ENCODE measurements at regions of chr12 and their contacts with region 1.

Region 1: GRCh38 chr12:56189176-56189917 is at the start of gene SMARCC2:
- DNase-seq: peak; percentile 75
- ATAC-seq: peak; percentile 85
- H3K4me3 ChIP-seq: peak within 1 kb of the TSS; percentile 86 to 88
- H3K27ac ChIP-seq: peak within 1 kb of the TSS; percentile 84
- H3K4me1 ChIP-seq: peaks cover 17 to 27% of the 10 kb centered on the region in 2 experiments
- H3K27me3 ChIP-seq: no peaks in the 10 kb centered on the region
- CTCF ChIP-seq: peak; percentile 65 to 70 (median 65)
- POLR2A ChIP-seq: no peak
- RAD21 ChIP-seq: peak; percentile 54; the same call in 1 of the 2 replicates
- total RNA-seq, gene SMARCC2: 99.7 TPM

Region 2: DNA sequence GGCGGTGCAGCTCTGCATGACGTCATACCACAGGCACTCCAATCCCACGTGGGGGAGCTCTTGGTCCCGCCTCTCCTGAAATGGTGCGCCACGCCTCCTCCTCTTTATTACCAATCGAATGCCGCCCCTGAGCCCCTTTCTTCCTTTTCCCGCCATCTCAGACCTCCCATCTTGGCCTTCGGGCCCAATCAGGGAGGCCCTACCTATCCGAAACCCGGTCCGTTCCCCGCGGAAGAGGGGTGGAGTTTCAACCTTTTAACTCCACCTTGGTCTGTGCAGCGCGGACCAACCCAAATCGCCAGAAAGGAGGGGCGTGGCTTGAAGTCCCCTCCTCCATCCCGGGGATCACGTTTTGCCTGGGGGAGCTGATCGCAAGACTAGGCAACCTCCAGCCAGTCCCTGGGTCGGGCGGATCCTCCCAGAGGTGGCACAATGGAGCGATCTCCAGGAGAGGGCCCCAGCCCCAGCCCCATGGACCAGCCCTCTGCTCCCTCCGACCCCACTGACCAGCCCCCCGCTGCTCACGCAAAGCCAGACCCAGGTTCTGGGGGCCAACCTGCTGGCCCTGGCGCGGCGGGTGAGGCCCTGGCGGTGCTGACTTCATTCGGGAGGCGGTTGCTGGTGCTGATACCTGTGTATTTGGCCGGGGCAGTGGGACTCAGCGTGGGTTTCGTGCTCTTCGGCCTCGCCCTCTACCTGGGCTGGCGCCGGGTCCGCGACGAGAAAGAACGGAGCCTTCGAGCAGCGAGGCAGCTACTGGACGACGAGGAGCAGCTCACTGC is 61.3 kb before region 1 on chr12 and contains the start of gene ESYT1:
- CTCF ChIA-PET with region 1: interaction called, 24 read pairs
- POLR2A ChIA-PET with region 1: interaction called, 17 read pairs
- RAD21 ChIA-PET with region 1: interaction called in 1 of 2 experiments, 6 read pairs
- intact Hi-C with region 1: no loop called
- DNase-seq: peak; percentile 100
- ATAC-seq: peak; percentile 93
- H3K4me3 ChIP-seq: peak within 1 kb of the TSS; percentile 90 to 91
- H3K27ac ChIP-seq: peak within 1 kb of the TSS; percentile 76
- H3K4me1 ChIP-seq: peaks cover 16 to 33% of the 10 kb centered on the region in 2 experiments
- H3K27me3 ChIP-seq: no peaks in the 10 kb centered on the region
- CTCF ChIP-seq: no peak
- POLR2A ChIP-seq: peak; percentile 88
- RAD21 ChIP-seq: no peak
- total RNA-seq, gene ESYT1: 80.9 TPM

Region 3: GRCh38 chr12:56224102-56224701 is 34.9 kb after region 1 on chr12 and contains the start of gene NABP2:
- CTCF ChIA-PET with region 1: interaction called, 16 read pairs
- POLR2A ChIA-PET with region 1: interaction called, 11 read pairs
- RAD21 ChIA-PET with region 1: no interaction called
- intact Hi-C with region 1: no loop called
- DNase-seq: peak; percentile 94
- ATAC-seq: peak; percentile 80
- H3K4me3 ChIP-seq: peak within 1 kb of the TSS; percentile 85 to 91
- H3K27ac ChIP-seq: peak within 1 kb of the TSS; percentile 82
- H3K4me1 ChIP-seq: peaks cover 8 to 35% of the 10 kb centered on the region in 2 experiments; a peak in 3 of 4 replicates
- H3K27me3 ChIP-seq: no peaks in the 10 kb centered on the region
- CTCF ChIP-seq: peak; percentile 72 to 97 (median 78)
- POLR2A ChIP-seq: no peak
- RAD21 ChIP-seq: peak; percentile 74
- total RNA-seq, gene NABP2: 52.9 TPM

Region 4: DNA sequence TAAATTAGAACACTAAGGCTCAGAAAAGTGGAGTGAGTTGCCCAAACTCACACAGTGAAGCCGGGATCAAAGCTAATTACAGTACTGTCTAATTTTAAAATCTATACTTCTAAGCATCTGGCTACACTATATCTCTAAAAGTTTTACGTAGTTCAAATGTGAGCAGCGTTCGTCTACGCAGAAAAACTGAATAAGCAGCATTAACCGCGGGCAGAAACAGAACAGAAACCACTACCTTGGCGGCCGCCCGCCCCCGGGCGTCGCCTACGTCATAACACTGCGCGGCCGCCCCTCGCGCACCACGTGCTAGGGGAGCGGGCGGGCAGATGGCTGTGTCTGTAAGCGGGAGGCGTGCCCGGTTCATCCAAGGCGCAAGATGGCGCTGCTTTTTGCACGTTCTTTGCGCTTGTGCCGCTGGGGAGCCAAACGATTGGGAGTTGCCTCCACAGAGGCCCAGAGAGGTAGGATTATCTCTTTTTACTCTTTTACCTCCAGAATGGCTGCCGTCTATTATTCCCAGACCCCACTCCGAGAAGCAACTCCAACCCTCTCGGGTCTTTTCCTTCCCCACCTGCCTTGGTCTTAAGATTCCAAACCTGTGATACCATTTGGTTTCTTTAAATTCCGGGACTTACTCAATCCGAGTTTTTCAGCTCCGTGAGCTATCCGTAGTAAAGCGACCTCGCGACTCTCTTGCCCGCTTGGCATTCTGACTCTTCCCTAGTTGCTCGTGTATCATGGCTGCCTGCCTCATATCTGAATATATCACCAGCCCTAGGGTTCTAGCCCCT is 279.1 kb after region 1 on chr12 and contains the start of gene SPRYD4:
- CTCF ChIA-PET with region 1: interaction called, 3 read pairs
- POLR2A ChIA-PET with region 1: no interaction called
- RAD21 ChIA-PET with region 1: no interaction called
- intact Hi-C with region 1: loop called (anchors 1 kb)
- DNase-seq: peak; percentile 82
- ATAC-seq: peak; percentile 84
- H3K4me3 ChIP-seq: peak within 1 kb of the TSS; percentile 74 to 99
- H3K27ac ChIP-seq: peak within 1 kb of the TSS; percentile 68
- H3K4me1 ChIP-seq: peaks cover 5 to 26% of the 10 kb centered on the region in 2 experiments
- H3K27me3 ChIP-seq: no peaks in the 10 kb centered on the region
- CTCF ChIP-seq: peak; percentile 15 to 43 (median 24); a peak in 2 of 6 replicates
- POLR2A ChIP-seq: peak; percentile 95
- RAD21 ChIP-seq: no peak
- total RNA-seq, gene SPRYD4: 2.5 TPM

Region 5: GRCh38 chr12:56593909-56594621 is 404.7 kb after region 1 on chr12:
- CTCF ChIA-PET with region 1: no interaction called
- POLR2A ChIA-PET with region 1: no interaction called
- RAD21 ChIA-PET with region 1: no interaction called
- intact Hi-C with region 1: loop called (anchors 5 kb)
- DNase-seq: peak; percentile 51
- ATAC-seq: peak; percentile 74
- H3K4me3 ChIP-seq: no peak overlapping the region
- H3K27ac ChIP-seq: no peak overlapping the region
- H3K4me1 ChIP-seq: peaks cover 0 to 9% of the 10 kb centered on the region in 2 experiments; a peak in 1 of 4 replicates
- H3K27me3 ChIP-seq: no peaks in the 10 kb centered on the region
- CTCF ChIP-seq: peak; percentile 78 to 97 (median 95)
- POLR2A ChIP-seq: no peak
- RAD21 ChIP-seq: peak; percentile 83